ENCODE measurements at regions of chr1 and their contacts with region 1.

Region 1: DNA sequence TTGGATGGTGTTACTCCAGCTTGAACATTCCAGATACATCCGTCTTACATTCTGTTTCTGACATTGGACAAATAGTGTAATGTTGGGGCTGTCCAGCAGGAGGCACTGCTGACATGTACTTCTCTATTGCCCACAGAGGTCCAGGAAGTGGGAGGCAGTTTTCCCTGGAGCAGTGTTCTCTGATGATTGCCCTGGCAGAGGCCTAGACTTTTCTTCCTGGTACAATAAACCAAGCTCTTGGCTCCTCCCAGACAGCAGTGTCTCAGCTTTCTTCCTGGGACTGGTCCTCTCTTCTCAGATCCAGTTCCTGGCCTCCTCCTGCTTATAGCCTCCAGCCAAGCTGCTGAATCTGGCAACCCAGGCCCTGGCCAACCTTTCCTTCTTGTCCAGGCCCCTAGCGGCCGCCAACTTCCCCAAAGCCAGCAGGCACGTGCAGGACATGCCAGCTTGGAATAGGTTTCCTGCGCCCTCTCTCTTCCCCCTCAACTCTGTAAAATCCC is 14.9 kb upstream of the IFNLR1 start:
- DNase-seq: peak; percentile 80
- ATAC-seq: peak; percentile 41
- H3K4me3 Mint-ChIP-seq: no peak overlapping the region
- H3K27ac Mint-ChIP-seq: no peak overlapping the region
- H3K4me1 Mint-ChIP-seq: peaks cover 14% of the 10 kb centered on the region
- H3K27me3 Mint-ChIP-seq: peaks cover 11% of the 10 kb centered on the region
- CTCF ChIP-seq: peak; percentile 97

Region 2: GRCh38 chr1:23959041-23959460 is 242.9 kb before region 1 on chr1:
- CTCF ChIA-PET with region 1: no interaction called
- POLR2A ChIA-PET with region 1: no interaction called
- intact Hi-C with region 1: no loop called
- DNase-seq: peak; percentile 99
- ATAC-seq: peak; percentile 85
- H3K4me3 Mint-ChIP-seq: peak overlapping the region; percentile 99
- H3K27ac Mint-ChIP-seq: peak overlapping the region; percentile 100
- H3K4me1 Mint-ChIP-seq: peaks cover 52% of the 10 kb centered on the region
- H3K27me3 Mint-ChIP-seq: no peaks in the 10 kb centered on the region
- CTCF ChIP-seq: peak; percentile 37

Region 3: DNA sequence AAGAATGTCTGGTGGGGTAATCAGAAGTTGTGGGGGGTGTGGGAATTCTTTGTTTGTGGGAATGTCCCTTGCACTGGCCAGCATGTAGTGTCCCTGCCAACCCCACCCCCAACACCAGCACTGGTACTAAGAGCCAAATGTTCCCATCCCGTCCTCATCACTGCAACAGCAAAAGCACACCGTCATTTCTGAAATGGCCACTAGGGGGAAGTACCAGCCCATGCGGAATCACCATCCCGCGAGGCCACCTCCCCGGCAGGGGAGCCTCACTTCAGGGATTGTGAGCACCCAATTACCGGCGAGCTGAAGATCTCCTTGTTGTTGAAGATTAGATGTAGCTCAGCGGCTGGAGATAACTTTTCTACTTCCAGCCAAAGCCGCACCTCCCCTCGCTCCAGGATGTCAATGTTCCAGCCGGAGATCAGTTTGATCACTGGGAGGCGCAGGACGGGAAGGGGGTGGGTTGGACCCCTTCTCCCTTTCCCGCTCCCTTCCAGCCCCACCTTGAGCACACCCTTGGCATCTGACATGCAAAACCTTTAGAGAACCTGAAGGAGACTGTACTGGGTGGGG is 131.1 kb before region 1 on chr1:
- CTCF ChIA-PET with region 1: interaction called, 10 read pairs
- POLR2A ChIA-PET with region 1: no interaction called
- intact Hi-C with region 1: no loop called
- DNase-seq: peak; percentile 87
- ATAC-seq: peak; percentile 98
- H3K4me3 Mint-ChIP-seq: no peak overlapping the region
- H3K27ac Mint-ChIP-seq: no peak overlapping the region
- H3K4me1 Mint-ChIP-seq: no peaks in the 10 kb centered on the region
- H3K27me3 Mint-ChIP-seq: peaks cover 2% of the 10 kb centered on the region
- CTCF ChIP-seq: peak; percentile 81

Region 4: GRCh38 chr1:24215226-24215814 is 13.3 kb after region 1 on chr1:
- CTCF ChIA-PET with region 1: interaction called, 13 read pairs
- POLR2A ChIA-PET with region 1: interaction called, 3 read pairs
- intact Hi-C with region 1: no loop called
- DNase-seq: no peak
- ATAC-seq: no peak
- H3K4me3 Mint-ChIP-seq: no peak overlapping the region
- H3K27ac Mint-ChIP-seq: no peak overlapping the region
- H3K4me1 Mint-ChIP-seq: no peaks in the 10 kb centered on the region
- H3K27me3 Mint-ChIP-seq: peaks cover 37% of the 10 kb centered on the region
- CTCF ChIP-seq: no peak

Region 5: GRCh38 chr1:24351918-24352627 is 150.1 kb after region 1 on chr1:
- CTCF ChIA-PET with region 1: interaction called, 15 read pairs
- POLR2A ChIA-PET with region 1: no interaction called
- intact Hi-C with region 1: no loop called
- DNase-seq: peak; percentile 86
- ATAC-seq: peak; percentile 45
- H3K4me3 Mint-ChIP-seq: no peak overlapping the region
- H3K27ac Mint-ChIP-seq: no peak overlapping the region
- H3K4me1 Mint-ChIP-seq: peaks cover 37% of the 10 kb centered on the region
- H3K27me3 Mint-ChIP-seq: peaks cover 1% of the 10 kb centered on the region
- CTCF ChIP-seq: no peak

Region 6: DNA sequence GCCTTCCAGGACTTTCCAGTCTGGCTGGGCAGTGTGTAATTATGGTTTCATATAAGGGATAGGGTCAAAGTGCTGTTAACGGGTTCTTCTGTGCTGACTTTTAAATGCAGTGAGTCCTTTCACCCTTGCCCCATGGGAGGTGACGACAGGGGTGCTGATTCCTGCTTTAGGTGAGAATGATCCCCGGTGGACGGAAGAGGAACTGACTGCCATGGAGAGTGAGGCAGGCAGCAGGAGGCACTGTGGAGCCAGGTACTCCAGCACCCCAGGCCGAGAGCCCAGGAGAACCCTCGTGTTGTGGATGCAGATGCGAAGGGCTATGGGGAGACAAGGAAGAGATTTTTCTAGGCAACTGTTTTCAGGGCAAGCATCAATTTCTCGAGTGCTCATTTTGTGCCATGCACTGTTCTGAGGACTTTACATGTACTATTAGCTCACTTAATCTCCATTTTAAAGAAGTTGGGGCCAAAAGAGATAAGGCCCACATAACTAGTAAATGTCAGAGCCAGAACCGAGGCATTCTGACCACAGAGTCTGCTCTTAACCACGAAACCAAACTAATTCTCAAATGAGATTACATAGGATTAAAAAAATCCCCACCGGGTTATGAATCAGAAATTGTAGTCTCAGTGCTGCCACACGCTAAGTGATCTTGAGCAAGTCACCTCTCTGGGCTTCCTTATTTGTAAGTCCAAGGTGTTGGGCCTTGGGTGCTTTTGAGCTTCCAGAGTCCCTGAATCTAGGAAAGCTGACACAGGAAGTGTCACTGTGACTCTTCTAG is 183.4 kb after region 1 on chr1:
- CTCF ChIA-PET with region 1: interaction called, 376 read pairs
- POLR2A ChIA-PET with region 1: interaction called, 3 read pairs
- intact Hi-C with region 1: no loop called
- DNase-seq: peak; percentile 61
- ATAC-seq: peak; percentile 57
- H3K4me3 Mint-ChIP-seq: no peak overlapping the region
- H3K27ac Mint-ChIP-seq: peak overlapping the region; percentile 14
- H3K4me1 Mint-ChIP-seq: peaks cover 28% of the 10 kb centered on the region
- H3K27me3 Mint-ChIP-seq: no peaks in the 10 kb centered on the region
- CTCF ChIP-seq: peak; percentile 74

Region 7: DNA sequence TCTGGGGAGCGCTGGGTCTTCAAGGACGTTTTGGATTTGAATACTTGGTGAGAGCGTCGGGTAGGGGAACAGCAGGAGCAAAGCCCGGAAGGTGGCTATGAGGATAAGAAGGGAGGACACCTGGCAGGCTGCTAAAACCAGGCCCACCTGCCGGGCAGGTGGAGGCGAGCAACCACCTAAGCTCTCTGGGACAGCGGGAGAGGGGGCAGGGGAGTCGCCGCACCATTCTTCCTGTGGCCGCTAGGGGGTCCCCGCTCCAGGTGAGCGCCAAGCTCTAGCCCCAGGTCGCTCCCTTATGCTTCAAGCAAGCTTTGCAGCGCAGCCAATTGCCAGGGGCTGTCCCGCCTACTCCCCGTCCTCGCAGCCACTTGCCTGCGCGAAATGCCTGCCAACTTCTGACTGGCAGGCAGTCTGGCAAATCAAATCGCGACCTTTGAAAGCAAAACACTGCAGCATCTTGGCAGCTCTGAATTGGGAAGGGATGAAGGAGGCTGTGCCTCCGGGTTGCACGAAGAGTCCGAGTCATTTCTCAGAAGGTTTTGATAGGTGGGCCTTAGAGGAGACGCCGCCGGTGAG is 213.4 kb after region 1 on chr1 and contains the start of gene NIPAL3:
- CTCF ChIA-PET with region 1: interaction called, 16 read pairs
- POLR2A ChIA-PET with region 1: interaction called, 3 read pairs
- intact Hi-C with region 1: no loop called
- DNase-seq: peak; percentile 99
- ATAC-seq: peak; percentile 93
- H3K4me3 Mint-ChIP-seq: peak within 1 kb of the TSS; percentile 98
- H3K27ac Mint-ChIP-seq: peak within 1 kb of the TSS; percentile 95
- H3K4me1 Mint-ChIP-seq: peaks cover 47% of the 10 kb centered on the region
- H3K27me3 Mint-ChIP-seq: no peaks in the 10 kb centered on the region
- CTCF ChIP-seq: peak; percentile 82
- total RNA-seq, gene NIPAL3: 33.2 to 33.3 TPM

Measured in activated CD8-positive, alpha-beta T cell treated with anti-CD3 and anti-CD28 coated beads for 36 hours (primary cell).